ENCODE measurements at regions of chr13 and their contacts with region 1.

Region 1: DNA sequence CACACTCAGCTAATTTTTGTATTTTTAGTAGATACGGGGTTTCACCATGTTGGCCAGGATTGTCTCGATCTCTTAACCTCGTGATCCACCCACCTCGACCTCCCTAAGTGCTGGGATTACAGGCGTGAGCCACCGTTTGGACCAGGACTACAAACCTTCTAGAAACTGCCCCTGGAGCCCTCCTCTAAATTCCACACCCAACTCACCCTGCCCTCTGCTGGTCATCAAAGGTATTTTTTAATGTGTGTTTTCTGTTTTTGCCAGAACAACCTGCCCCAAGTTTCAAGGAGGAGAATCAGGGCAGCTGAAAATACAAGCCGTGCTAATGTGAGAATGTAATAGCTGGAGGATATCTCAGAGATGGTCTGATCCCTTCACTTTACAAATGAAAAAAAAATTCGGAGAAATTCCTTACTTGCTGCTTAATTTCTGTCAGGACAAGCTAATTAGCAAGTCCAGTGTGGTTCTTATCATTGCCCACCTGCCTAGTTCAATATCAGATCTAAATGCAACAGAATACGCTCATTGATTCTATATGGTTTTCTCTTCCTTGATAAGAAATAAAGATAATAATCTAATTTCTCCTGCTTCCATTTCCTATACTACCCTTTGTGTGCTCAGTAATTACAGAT is 4.1 kb downstream of the ATP8A2 start:
- DNase-seq: peak; percentile 13 to 25
- ATAC-seq: peak in 1 of 2 experiments; percentile 69; a peak in 3 of 6 replicates
- H3K4me3 ChIP-seq: no peak overlapping the region
- H3K27ac ChIP-seq: no peak overlapping the region
- H3K4me1 ChIP-seq: no peaks in the 10 kb centered on the region; the same call in 2 of the 3 replicates
- CTCF ChIP-seq: peak; percentile 53
- EP300 ChIP-seq: no peak
- POLR2A ChIP-seq: no peak
- RAD21 ChIP-seq: peak; percentile 27 to 42; a peak in 3 of 5 replicates

Region 2: DNA sequence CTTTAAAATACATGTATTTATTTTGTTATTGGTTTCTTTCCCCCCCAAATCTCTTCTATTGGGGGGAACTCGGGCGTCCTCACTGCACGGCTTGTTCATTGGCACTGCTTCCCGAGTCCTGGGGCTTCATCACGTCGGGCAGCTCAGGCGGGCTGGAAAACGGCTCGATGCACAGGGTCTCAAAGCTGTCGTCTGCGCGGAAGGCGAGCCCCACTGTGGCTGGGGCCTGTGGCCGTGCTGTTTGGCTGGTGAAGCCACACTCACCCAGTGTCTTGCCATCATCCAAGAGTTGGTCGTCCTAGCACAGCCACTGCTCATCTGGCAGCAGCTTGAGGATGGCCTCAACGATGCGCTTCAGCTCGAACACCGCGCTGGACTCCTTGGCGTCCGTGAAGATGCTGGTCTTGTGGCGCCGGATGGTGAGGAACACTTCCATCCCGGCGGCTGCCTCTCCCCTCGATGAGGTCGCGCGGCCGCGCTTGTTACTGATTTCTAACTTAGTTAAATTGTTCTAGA is 10.1 kb before region 1 on chr13:
- CTCF ChIA-PET with region 1: interaction called, 16 read pairs
- POLR2A ChIA-PET with region 1: no interaction called
- DNase-seq: no peak
- ATAC-seq: no peak
- H3K4me3 ChIP-seq: no peak overlapping the region
- H3K27ac ChIP-seq: no peak overlapping the region
- H3K4me1 ChIP-seq: no peaks in the 10 kb centered on the region
- CTCF ChIP-seq: no peak
- EP300 ChIP-seq: no peak
- POLR2A ChIP-seq: no peak
- RAD21 ChIP-seq: no peak

Region 3: DNA sequence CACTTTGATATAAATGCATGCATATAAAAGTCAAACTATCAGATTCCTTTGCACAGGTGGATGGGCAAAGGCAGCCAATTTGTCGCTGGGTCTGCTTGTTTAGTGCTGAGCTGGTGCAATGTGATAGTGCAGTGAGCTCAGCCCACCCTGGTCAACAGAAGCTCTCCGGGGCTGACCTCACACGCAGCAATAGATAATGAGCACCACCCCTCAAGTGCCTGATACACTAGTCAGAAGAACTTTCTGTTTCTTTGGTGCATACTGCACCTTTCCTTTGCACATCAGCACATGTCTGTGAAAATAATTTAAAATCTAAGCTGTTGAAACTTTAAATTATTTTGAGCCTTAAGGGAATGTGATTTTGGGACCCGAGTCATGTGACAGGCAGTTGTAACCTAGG is 16.1 kb after region 1 on chr13:
- CTCF ChIA-PET with region 1: interaction called, 11 read pairs
- POLR2A ChIA-PET with region 1: no interaction called
- DNase-seq: no peak
- ATAC-seq: no peak
- H3K4me3 ChIP-seq: no peak overlapping the region
- H3K27ac ChIP-seq: no peak overlapping the region
- H3K4me1 ChIP-seq: no peaks in the 10 kb centered on the region
- CTCF ChIP-seq: no peak
- EP300 ChIP-seq: no peak
- POLR2A ChIP-seq: no peak
- RAD21 ChIP-seq: no peak

Region 4: DNA sequence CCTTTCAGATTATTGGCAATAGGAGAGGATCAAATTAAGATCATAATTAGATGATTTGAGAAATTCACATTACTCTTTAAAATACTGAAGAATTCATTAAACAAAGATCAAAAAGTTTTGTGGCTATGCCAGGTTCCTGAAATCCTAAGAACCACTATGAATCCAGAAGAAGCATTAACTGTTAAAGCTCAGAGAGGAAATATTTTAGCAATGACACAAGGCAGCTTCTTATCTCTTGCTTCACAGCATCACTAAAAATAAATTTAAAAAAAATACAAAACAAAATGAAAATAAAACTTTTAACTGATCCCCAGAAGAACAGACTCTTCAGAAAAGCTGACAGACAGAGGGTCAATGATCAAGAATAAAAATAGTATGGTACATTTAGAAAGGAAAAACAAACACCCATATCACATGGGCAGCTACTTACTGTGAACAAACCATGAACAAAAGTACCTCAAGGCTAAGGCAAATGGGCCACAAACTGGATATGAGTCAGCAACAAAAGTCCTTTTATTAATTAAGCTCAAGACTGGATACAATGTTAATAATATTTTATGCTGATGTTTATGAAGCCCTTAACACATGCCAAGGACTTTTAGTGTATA is 826.6 kb after region 1 on chr13:
- CTCF ChIA-PET with region 1: no interaction called
- POLR2A ChIA-PET with region 1: no interaction called
- DNase-seq: no peak
- ATAC-seq: no peak
- H3K4me3 ChIP-seq: no peak overlapping the region
- H3K27ac ChIP-seq: no peak overlapping the region
- H3K4me1 ChIP-seq: no peaks in the 10 kb centered on the region
- CTCF ChIP-seq: no peak
- EP300 ChIP-seq: no peak
- POLR2A ChIP-seq: no peak
- RAD21 ChIP-seq: no peak